ENCODE measurements at regions of chr3 and their contacts with region 1.

Region 1: GRCh38 chr3:27900316-27900715 is 178.2 kb upstream of the EOMES start:
- DNase-seq: no peak
- ATAC-seq: no peak
- H3K4me3 ChIP-seq: no peak overlapping the region
- H3K27ac ChIP-seq: no peak overlapping the region
- H3K4me1 ChIP-seq: no peaks in the 10 kb centered on the region
- H3K27me3 ChIP-seq: no peaks in the 10 kb centered on the region
- CTCF ChIP-seq: no peak
- EP300 ChIP-seq: no peak
- POLR2A ChIP-seq: no peak
- RAD21 ChIP-seq: no peak

Region 2: GRCh38 chr3:27923349-27924068 is 23.2 kb after region 1 on chr3:
- CTCF ChIA-PET with region 1: no interaction called
- POLR2A ChIA-PET with region 1: no interaction called
- in situ Hi-C with region 1: no loop called
- intact Hi-C with region 1: loop called (anchors 1 kb)
- DNase-seq: no peak
- ATAC-seq: no peak
- H3K4me3 ChIP-seq: no peak overlapping the region
- H3K27ac ChIP-seq: no peak overlapping the region
- H3K4me1 ChIP-seq: no peaks in the 10 kb centered on the region
- H3K27me3 ChIP-seq: no peaks in the 10 kb centered on the region
- CTCF ChIP-seq: no peak
- EP300 ChIP-seq: no peak
- POLR2A ChIP-seq: no peak
- RAD21 ChIP-seq: no peak

Measured in HepG2 (cell line).